ENCODE measurements at regions of chr10 and their contacts with region 1.

Region 1: GRCh38 chr10:70478191-70479164 is at the start of gene PALD1:
- DNase-seq: peak in 6 of 14 experiments; percentile 3 to 62 (median 36)
- ATAC-seq: peak; percentile 8
- H3K4me3 ChIP-seq: peak within 1 kb of the TSS; percentile 49
- H3K4me3 Mint-ChIP-seq: peak within 1 kb of the TSS; percentile 84
- H3K27ac ChIP-seq: no peak within 1 kb of the TSS
- H3K27ac Mint-ChIP-seq: peak within 1 kb of the TSS; percentile 58
- H3K4me1 ChIP-seq: peaks cover 50% of the 10 kb centered on the region
- H3K4me1 Mint-ChIP-seq: peaks cover 64% of the 10 kb centered on the region
- H3K27me3 ChIP-seq: no peaks in the 10 kb centered on the region
- H3K27me3 Mint-ChIP-seq: no peaks in the 10 kb centered on the region
- CTCF ChIP-seq: no peak
- total RNA-seq, gene PALD1: 0.36 to 0.44 TPM

Region 2: DNA sequence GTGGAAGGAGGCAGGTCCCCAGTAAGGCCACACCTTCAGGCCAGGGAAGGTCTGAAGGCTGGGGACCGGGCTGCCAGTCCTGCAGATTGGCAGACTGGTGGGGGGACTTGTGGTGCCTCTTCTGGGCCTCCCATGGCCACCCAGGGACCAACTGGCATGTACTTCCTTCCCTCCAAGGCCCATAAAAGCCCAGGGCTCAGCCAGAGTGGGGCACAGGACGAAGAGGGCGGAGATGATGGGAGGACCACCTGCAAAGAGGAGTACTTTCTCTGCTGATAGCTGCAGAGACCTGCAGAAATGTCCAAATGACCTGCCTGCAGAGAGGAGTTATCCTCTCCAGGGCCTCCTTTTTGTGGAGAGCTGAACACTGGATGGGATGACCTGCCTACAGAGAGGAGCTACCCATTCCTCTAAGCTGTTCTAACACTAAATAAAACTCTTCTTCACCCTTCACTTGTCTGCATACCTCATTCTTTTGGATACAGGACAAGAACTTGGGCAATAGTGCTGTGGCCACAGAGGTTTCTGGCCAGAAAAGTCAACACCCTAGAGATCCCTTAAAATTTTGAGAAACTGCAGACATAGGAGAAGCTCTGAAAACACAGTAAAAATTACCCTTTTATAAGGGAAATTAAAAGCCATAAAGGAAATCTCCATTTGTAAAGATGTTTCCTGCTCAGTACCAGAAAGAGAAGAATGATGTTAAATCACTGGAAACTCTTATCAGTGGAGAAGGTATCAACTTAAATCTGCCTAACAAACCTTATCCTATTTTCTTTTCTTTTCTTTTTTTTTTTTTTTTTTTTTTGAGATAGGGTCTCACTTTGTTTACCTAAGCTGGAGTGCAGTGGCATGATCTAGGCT is 144.7 kb after region 1 on chr10:
- CTCF ChIA-PET with region 1: no interaction called
- POLR2A ChIA-PET with region 1: no interaction called
- intact Hi-C with region 1: no loop called
- DNase-seq: no peak
- ATAC-seq: no peak
- H3K4me3 ChIP-seq: no peak overlapping the region
- H3K4me3 Mint-ChIP-seq: no peak overlapping the region
- H3K27ac ChIP-seq: no peak overlapping the region
- H3K27ac Mint-ChIP-seq: no peak overlapping the region
- H3K4me1 ChIP-seq: no peaks in the 10 kb centered on the region
- H3K4me1 Mint-ChIP-seq: no peaks in the 10 kb centered on the region
- H3K27me3 ChIP-seq: no peaks in the 10 kb centered on the region
- H3K27me3 Mint-ChIP-seq: peaks cover 7% of the 10 kb centered on the region
- CTCF ChIP-seq: no peak

Region 3: GRCh38 chr10:70815504-70816219 is 337.2 kb after region 1 on chr10 and contains the start of gene SGPL1:
- CTCF ChIA-PET with region 1: no interaction called
- POLR2A ChIA-PET with region 1: no interaction called
- intact Hi-C with region 1: loop called in 1 of 2 experiments (anchors 5 kb)
- DNase-seq: peak; percentile 64 to 92 (median 82)
- ATAC-seq: peak; percentile 89
- H3K4me3 ChIP-seq: peak within 1 kb of the TSS; percentile 79
- H3K4me3 Mint-ChIP-seq: peak within 1 kb of the TSS; percentile 90
- H3K27ac ChIP-seq: peak within 1 kb of the TSS in 1 of 2 donors; percentile 44
- H3K27ac Mint-ChIP-seq: peak within 1 kb of the TSS; percentile 80
- H3K4me1 ChIP-seq: peaks cover 25% of the 10 kb centered on the region
- H3K4me1 Mint-ChIP-seq: peaks cover 52% of the 10 kb centered on the region
- H3K27me3 ChIP-seq: no peaks in the 10 kb centered on the region
- H3K27me3 Mint-ChIP-seq: no peaks in the 10 kb centered on the region
- CTCF ChIP-seq: peak; percentile 88
- total RNA-seq, gene SGPL1: 15.1 to 16.9 TPM

Region 4: GRCh38 chr10:71527135-71527534 is 1048.7 kb after region 1 on chr10:
- CTCF ChIA-PET with region 1: no interaction called
- POLR2A ChIA-PET with region 1: no interaction called
- intact Hi-C with region 1: no loop called
- DNase-seq: no peak
- ATAC-seq: no peak
- H3K4me3 ChIP-seq: no peak overlapping the region
- H3K4me3 Mint-ChIP-seq: no peak overlapping the region
- H3K27ac ChIP-seq: no peak overlapping the region
- H3K27ac Mint-ChIP-seq: no peak overlapping the region
- H3K4me1 ChIP-seq: peaks cover 3% of the 10 kb centered on the region
- H3K4me1 Mint-ChIP-seq: no peaks in the 10 kb centered on the region
- H3K27me3 ChIP-seq: peaks cover 0 to 3% of the 10 kb centered on the region in 2 experiments
- H3K27me3 Mint-ChIP-seq: peaks cover 10% of the 10 kb centered on the region
- CTCF ChIP-seq: no peak

Measured in CD4-positive, alpha-beta T cell (primary cell).